Activated B cell treated with CpG ODN at 0.5 μM for 24 hours (primary cell): ENCODE measurements at regions of chr12 and their contacts with region 1.

Region 1: GRCh38 chr12:30631740-30632139 is 63.9 kb downstream of the IPO8 start:
- DNase-seq: no peak
- ATAC-seq: no peak
- H3K4me3 Mint-ChIP-seq: no peak overlapping the region
- H3K27ac Mint-ChIP-seq: no peak overlapping the region
- H3K4me1 Mint-ChIP-seq: no peaks in the 10 kb centered on the region
- H3K27me3 Mint-ChIP-seq: no peaks in the 10 kb centered on the region
- CTCF ChIP-seq: no peak

Region 2: GRCh38 chr12:30774599-30774998 is 142.9 kb after region 1 on chr12:
- CTCF ChIA-PET with region 1: no interaction called
- POLR2A ChIA-PET with region 1: interaction called, 15 read pairs
- intact Hi-C with region 1: no loop called
- DNase-seq: no peak
- ATAC-seq: no peak
- H3K4me3 Mint-ChIP-seq: no peak overlapping the region
- H3K27ac Mint-ChIP-seq: no peak overlapping the region
- H3K4me1 Mint-ChIP-seq: no peaks in the 10 kb centered on the region
- H3K27me3 Mint-ChIP-seq: peaks cover 11% of the 10 kb centered on the region
- CTCF ChIP-seq: no peak